Breast epithelium (tissue), 4 donors: ENCODE measurements at regions of chr1 and their contacts with region 1.

Region 1: DNA sequence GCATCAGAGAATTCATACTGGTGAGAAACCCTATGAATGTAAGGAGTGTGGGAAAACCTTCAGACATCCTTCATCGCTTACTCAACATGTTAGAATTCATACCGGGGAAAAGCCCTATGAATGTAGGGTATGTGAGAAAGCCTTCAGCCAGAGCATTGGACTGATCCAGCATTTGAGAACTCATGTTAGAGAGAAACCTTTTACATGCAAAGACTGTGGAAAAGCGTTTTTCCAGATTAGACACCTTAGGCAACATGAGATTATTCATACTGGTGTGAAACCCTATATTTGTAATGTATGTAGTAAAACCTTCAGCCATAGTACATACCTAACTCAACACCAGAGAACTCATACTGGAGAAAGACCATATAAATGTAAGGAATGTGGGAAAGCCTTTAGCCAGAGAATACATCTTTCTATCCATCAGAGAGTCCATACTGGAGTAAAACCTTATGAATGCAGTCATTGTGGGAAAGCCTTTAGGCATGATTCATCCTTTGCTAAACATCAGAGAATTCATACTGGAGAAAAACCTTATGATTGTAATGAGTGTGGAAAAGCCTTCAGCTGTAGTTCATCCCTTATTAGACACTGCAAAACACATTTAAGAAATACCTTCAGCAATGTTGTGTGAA is 12.8 kb downstream of the ZFP69B start:
- DNase-seq: no peak
- H3K4me3 ChIP-seq: no peak overlapping the region
- H3K27ac ChIP-seq: no peak overlapping the region
- H3K4me1 ChIP-seq: no peaks in the 10 kb centered on the region
- H3K27me3 ChIP-seq: no peaks in the 10 kb centered on the region
- CTCF ChIP-seq: no peak
- POLR2A ChIP-seq: no peak

Region 2: GRCh38 chr1:38608202-38608864 is 1854.7 kb before region 1 on chr1:
- intact Hi-C with region 1: no loop called
- DNase-seq: no peak
- H3K4me3 ChIP-seq: no peak overlapping the region
- H3K27ac ChIP-seq: no peak overlapping the region
- H3K4me1 ChIP-seq: no peaks in the 10 kb centered on the region
- H3K27me3 ChIP-seq: no peaks in the 10 kb centered on the region
- CTCF ChIP-seq: peak in 1 of 3 donors; percentile 16
- POLR2A ChIP-seq: no peak

Region 3: DNA sequence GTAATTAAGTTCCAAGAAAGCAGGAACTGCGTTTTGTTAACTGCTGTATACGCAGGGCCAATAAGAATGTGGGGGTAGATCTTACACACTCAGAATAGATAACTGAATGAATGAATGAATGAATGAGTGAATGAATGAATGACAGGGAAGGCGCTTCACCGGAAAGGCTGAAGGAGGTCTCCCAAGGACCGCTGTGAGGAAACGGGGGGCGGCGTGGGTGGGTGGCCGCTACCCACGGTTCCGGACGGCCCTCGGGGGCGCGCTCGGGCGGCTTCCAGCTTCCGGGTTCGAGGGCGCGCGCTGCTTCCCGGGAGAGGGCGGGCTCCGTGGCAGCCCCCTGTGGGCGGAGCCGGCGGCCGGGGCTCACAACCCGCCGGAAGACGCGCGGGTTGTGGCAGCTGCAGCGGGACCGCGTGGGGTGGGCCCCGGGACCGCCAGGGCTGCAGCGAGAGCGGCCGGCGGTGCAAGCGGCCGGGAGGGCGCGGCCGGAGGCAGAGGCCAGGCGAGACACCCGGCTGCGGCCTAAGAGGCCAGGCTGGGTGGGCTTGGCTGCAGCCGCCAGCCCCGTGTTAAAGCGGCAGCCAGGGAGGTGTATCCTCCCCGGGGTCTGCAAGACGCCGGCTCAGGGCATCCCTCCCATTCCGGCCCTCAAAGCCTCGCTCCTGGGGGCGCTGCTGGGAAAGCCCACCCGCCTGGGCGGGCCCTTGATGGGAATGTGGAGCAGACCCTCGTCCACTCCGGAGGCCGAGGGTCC is 14.0 kb after region 1 on chr1 and contains the start of gene ZFP69:
- intact Hi-C with region 1: loop called (anchors 2 kb)
- DNase-seq: peak in 1 of 2 donors; percentile 24
- H3K4me3 ChIP-seq: peak within 1 kb of the TSS; percentile 76 to 87 (median 79)
- H3K27ac ChIP-seq: peak within 1 kb of the TSS; percentile 2 to 19
- H3K4me1 ChIP-seq: peaks cover 0 to 3% of the 10 kb centered on the region in 2 donors
- H3K27me3 ChIP-seq: no peaks in the 10 kb centered on the region
- CTCF ChIP-seq: no peak
- POLR2A ChIP-seq: no peak
- total RNA-seq, gene ZFP69: 2.2 to 4.8 (median 4.6) TPM

Region 4: GRCh38 chr1:41455479-41456332 is 992.6 kb after region 1 on chr1:
- intact Hi-C with region 1: no loop called
- DNase-seq: peak; percentile 66 to 96
- H3K4me3 ChIP-seq: no peak overlapping the region
- H3K27ac ChIP-seq: peak overlapping the region; percentile 63 to 70
- H3K4me1 ChIP-seq: peaks cover under 1 to 17% of the 10 kb centered on the region in 2 donors
- H3K27me3 ChIP-seq: no peaks in the 10 kb centered on the region
- CTCF ChIP-seq: no peak
- POLR2A ChIP-seq: no peak